Ascending aorta (tissue), 2 donors: ENCODE measurements at regions of chr15 and their contacts with region 1.

Region 1: DNA sequence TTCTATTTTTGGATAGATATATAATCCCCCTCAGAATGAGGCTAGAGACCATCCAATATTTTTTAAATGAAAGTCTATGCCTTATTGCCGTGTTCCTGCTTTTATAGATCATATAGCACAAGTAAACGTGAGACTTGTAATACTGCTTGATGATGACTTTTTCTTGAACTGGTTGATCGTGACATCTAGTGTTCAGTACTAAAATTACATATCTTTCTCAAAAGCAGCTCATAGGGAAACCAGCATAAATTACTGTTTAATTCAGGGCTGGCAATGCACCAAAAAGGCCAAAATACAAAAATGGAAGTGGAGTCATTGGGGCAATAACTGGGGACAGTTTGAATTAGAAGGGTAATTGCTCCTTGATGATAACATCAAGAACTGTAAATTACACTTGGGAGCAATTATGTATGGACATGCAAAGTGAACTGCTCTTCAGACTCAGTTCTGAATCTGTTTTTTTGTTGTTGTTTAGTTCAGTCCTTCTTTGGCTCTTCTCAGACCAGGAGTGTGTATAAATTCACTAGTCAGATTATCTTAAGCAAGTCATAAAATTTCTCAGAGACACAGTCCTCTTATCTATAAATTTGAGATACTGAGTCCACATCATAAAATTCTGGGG is 325.3 kb downstream of the THSD4 start:
- DNase-seq: no peak
- H3K4me3 ChIP-seq: no peak overlapping the region
- H3K27ac ChIP-seq: no peak overlapping the region
- H3K4me1 ChIP-seq: peaks cover 1 to 19% of the 10 kb centered on the region in 2 donors
- H3K27me3 ChIP-seq: no peaks in the 10 kb centered on the region
- CTCF ChIP-seq: peak; percentile 60 to 75 (median 62)

Region 2: DNA sequence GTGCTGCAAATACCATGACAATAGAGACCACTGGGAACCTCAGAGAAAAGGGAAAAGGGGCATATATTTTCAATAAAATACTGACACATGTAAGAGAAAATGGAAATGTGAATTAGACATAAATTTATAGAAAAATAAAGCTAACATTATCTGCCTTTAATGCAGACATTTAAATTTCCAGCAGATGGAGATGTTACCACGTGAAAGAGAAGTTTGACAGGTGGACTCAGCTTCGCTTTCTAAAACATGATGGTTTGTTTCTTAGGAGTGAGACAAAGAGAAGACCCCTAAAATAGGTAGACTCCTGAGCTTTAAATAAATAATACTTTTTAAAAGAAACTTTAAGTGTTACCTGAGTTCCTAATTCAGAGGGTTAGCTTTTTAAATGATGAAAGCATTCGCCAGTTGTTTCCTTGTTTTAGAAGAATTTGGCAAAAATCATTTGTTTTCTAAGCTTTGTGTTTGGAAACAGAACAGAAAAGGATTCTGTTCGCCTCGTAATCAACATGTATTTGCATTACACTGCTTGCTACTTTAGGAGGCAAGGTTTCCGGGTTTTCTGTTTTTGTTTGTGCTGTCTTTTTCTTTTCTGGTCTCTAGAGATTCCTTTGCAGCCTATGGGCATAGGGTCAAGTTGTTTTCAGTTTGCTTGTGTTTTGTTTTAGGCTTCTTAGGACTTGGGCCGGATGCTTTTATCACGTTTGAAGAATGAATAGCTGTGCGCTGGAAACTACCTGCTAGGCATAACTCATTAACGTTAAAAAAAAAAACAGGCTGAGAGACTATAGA is 54.0 kb before region 1 on chr15:
- intact Hi-C with region 1: loop called (anchors 1 kb)
- DNase-seq: no peak
- H3K4me3 ChIP-seq: no peak overlapping the region
- H3K27ac ChIP-seq: peak overlapping the region in 1 of 2 donors; percentile 13
- H3K4me1 ChIP-seq: peaks cover 6 to 28% of the 10 kb centered on the region in 2 donors
- H3K27me3 ChIP-seq: no peaks in the 10 kb centered on the region
- CTCF ChIP-seq: peak; percentile 50 to 65 (median 52)